ENCODE measurements at regions of chr3 and their contacts with region 1.

Region 1: DNA sequence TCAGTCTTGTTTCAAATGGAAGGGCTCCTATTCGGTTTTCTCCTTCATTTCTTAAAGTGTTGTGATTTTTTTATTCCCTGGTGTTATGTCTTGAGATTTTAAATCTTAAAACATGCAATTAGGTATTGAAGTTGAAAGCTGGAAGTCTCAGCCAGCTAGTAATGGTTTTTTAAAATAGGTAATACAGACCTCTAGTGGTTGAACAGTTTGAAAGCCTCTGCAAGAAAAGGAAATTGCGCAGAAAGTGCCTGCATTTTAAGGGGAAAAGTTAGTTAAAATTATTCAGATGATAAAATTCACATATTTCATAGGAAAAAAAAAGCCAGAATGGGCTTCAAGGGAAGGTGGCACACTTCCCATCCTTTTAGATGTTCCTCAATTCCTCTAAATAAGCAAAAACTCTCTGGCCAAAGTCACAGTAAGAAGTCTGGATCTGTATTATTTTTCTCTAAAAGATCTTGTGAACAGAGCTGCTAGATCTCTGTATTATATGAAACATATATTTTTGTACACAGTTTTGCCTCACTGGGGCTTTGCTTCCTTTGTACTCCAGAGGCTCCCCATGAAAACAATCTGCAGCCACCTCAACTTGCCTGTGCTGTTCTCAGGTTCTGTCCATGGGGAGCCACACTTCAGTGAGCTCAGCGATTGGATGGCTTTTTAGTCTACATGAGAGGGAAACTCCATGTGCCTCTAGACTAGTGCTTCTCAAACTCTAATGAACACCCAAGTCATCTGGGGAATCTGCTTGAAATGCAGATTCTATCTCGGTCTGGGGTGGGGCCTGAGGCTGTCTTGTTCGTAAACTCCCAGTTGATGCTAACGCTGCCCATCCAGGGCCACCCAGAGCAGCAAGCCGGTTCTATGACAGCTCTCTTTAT is 21.5 kb downstream of the AGTR1 start:
- DNase-seq: no peak

Region 2: GRCh38 chr3:147231111-147231510 is 1488.1 kb before region 1 on chr3:
- intact Hi-C with region 1: no loop called
- DNase-seq: no peak

Region 3: GRCh38 chr3:148379763-148380382 is 339.3 kb before region 1 on chr3:
- intact Hi-C with region 1: loop called (anchors 5 kb)
- DNase-seq: no peak

Region 4: DNA sequence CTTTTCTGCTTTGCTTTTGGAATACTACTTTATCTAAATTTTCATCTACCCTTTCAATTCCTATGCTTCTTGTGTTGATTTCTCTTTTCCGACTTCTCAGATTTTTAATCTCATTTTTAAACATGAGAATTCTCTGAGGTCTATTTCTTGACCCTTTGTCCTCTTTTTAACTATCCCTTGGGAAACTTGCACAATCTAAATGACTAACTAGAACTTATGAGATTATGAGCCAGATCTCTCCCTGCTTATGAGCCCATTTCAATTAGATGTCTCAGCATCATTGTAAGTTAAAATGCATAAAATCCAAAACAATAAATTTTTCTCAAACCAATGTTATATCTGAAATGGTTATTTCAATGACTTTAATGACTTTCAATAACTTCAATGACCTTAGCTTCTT is 318.5 kb before region 1 on chr3:
- intact Hi-C with region 1: no loop called
- DNase-seq: no peak